HEK293 (cell line): ENCODE measurements at regions of chr7 and their contacts with region 1.

Region 1: DNA sequence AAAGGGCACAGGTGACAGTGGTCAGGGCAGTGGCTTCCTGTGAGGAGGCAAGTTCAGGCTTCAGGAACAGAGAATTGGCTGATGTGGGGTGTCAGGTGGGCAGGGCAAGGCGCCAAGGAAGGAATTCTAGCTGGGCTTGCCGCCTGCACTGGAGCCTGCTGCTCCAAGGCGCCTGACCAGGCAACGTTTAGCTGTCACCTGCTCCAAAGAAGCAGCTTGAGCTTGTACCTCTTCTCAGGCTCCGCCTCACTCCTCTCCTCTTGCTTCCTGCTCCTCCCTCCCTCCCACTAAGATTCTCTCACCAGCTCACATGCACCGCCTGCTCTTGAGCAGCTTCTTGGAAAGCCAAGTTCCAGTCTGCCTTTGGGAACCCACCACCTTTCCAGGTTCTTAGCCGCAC is 187.4 kb upstream of the GRB10 start:
- H3K4me3 ChIP-seq: no peak overlapping the region
- H3K27ac ChIP-seq: no peak overlapping the region
- H3K4me1 ChIP-seq: no peaks in the 10 kb centered on the region
- CTCF ChIP-seq: no peak

Region 2: GRCh38 chr7:50718876-50719275 is 251.2 kb before region 1 on chr7:
- CTCF ChIA-PET with region 1: no interaction called
- POLR2A ChIA-PET with region 1: interaction called, 12 read pairs
- H3K4me3 ChIP-seq: no peak overlapping the region
- H3K27ac ChIP-seq: peak overlapping the region; percentile 51
- H3K4me1 ChIP-seq: peaks cover 24% of the 10 kb centered on the region
- CTCF ChIP-seq: no peak